ENCODE measurements at regions of chr14 and their contacts with region 1.

Region 1: GRCh38 chr14:61252369-61253063 is 28.6 kb downstream of the TMEM30B start:
- DNase-seq: peak; percentile 86 to 92
- H3K4me3 ChIP-seq: no peak overlapping the region
- H3K27ac ChIP-seq: no peak overlapping the region
- H3K4me1 ChIP-seq: peaks cover 0 to 4% (median 0%) of the 10 kb centered on the region in 4 donors
- H3K27me3 ChIP-seq: no peaks in the 10 kb centered on the region
- CTCF ChIP-seq: peak; percentile 87 to 89

Region 2: GRCh38 chr14:60622917-60623257 is 629.6 kb before region 1 on chr14:
- intact Hi-C with region 1: loop called (anchors 2 kb)
- DNase-seq: no peak
- H3K4me3 ChIP-seq: no peak overlapping the region
- H3K27ac ChIP-seq: peak overlapping the region in 1 of 2 donors; percentile 15
- H3K4me1 ChIP-seq: peaks cover 0 to 29% (median 0%) of the 10 kb centered on the region in 4 donors
- H3K27me3 ChIP-seq: no peaks in the 10 kb centered on the region
- CTCF ChIP-seq: no peak

Region 3: DNA sequence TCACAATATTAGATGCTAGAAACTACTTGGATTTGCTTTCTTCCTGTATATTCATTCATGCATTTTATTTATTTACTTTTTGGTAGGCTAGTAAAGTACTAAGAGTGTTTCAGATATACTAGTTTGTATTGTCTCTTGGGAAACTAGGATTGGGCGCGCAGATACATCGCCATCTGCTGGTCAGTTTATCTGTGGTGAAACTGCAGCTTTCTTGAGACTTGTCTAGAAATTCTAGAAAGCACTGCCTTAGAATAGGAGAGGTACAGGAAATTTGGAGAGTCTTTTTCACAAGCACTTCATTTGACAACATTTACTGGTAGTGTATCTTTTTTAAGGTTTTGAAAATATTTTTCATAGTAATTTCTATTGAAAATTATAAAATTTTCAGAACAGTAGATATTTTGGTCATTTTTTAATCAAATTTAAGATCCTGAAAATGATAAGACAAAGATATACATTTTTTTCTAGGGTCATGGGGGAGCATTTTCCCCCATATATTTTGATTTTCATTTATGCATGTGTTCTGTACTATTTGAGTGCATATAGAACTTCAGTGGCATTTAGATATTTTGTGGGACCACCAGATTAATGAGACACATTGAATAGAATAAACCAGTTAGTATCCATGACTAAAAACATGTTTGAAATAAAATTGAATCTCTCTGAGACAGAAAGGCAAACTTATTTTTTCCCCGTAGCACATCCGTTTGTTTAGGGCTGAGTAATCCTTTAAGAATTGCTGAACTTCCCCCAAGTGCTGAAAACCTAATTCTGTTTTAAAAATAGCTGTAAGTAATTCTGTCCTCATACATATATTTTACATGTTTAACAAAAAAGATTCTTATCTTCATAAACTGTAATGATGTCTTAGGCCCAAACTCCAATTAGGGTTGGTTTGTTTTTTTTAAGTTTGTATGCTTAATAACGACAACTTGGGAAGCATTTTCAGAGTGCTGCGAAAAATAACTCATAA is 227.0 kb before region 1 on chr14:
- intact Hi-C with region 1: loop called (anchors 10 kb)
- DNase-seq: peak; percentile 61 to 75
- H3K4me3 ChIP-seq: no peak overlapping the region
- H3K27ac ChIP-seq: peak overlapping the region in 1 of 2 donors; percentile 32
- H3K4me1 ChIP-seq: peaks cover 0 to 8% (median 0%) of the 10 kb centered on the region in 4 donors
- H3K27me3 ChIP-seq: no peaks in the 10 kb centered on the region
- CTCF ChIP-seq: peak; percentile 82 to 88

Region 4: GRCh38 chr14:61130512-61131260 is 121.8 kb before region 1 on chr14:
- intact Hi-C with region 1: no loop called
- DNase-seq: no peak
- H3K4me3 ChIP-seq: no peak overlapping the region
- H3K27ac ChIP-seq: no peak overlapping the region
- H3K4me1 ChIP-seq: peaks cover 0 to 9% (median 2%) of the 10 kb centered on the region in 4 donors
- H3K27me3 ChIP-seq: no peaks in the 10 kb centered on the region
- CTCF ChIP-seq: no peak